Left cardiac atrium (tissue), 4 donors: ENCODE measurements at regions of chr12 and their contacts with region 1.

Region 1: DNA sequence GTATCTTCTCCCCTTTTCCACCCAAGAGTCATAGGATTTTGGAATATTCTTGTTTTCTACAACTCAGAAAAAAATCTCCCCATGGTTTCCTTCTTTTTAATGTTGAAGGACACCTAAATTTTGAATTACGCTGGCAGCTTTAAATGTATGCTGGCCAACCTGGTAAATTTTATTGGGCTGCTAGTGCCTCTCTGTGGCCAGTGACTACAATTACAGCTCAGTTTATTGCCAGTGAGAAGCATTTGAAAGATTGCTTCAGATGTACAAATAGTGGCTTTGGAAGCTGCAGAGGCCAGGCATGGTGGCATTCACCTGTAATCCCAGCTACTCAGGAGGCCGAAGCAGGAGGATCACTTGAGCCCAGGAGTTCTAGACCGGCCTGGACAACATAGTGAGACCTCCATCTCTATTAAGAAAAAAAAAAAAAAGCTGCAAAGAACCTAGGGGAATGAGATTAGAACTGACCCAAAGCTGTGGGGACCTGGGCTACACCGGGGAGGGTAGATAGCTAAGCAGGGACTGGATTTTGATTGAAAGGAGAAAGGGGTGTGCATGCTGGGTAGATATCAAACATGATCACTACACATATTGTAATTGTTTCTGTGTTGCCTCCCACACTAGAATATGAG is 7.6 kb upstream of the RAB21 start:
- DNase-seq: no peak
- ATAC-seq: peak; percentile 78 to 86

Region 2: DNA sequence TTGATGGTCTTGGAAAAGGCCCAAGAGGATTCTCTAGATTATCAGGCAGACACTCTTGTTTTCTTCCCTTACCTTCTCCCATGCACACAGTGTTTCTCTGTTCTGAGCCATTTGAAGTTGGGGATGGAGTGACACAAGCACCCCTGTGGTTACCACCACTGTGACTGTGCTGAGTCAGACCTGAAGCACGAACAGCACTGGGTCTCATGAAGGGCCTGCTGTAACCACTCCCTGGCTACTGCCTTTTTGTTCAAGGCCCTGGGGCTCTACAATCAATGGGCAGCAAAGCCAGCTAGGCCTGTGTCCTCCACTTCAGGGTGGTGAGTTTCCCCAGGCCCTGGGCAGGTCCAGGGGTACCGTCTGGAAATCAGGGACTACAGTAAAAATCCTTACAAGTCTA is 654.8 kb before region 1 on chr12:
- intact Hi-C with region 1: no loop called
- DNase-seq: no peak
- ATAC-seq: no peak

Region 3: GRCh38 chr12:71415336-71416231 is 331.5 kb before region 1 on chr12:
- intact Hi-C with region 1: loop called (anchors 5 kb)
- DNase-seq: no peak
- ATAC-seq: peak; percentile 56 to 73

Region 4: DNA sequence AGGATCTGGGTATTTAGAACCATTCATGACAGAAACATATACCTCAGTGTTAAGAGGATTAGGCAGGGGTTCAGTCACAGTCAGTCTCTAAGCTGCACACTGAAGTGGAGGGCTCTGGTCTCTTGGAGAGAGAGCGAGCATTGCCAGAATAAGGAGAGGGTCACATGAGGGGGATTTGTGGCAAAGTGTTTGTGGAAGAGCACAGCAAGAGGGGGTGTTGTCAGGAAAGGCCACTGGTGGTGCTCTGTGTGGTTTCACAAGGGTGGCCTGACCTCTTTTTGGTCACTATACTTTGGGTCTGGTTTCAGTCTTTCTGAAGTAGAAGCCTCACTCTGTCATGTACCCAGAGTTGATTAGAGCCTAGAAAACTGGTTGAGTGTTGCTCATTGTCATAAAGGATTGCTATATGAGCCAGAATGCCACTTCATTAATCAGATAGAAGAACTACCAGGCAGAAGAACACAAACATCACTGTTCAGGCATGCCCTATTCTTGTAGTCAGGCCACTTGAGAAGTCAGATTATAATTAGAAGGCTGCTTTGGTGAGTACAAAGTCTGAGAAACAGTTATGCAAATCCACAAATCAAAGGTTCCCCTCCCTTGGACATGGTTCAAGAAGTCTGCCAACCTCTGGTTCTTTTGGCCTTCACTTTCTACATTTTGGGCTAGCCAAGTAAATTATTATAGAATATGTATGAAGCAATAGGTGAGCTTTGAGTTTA is 52.8 kb before region 1 on chr12:
- intact Hi-C with region 1: loop called in 1 of 2 experiments (anchors 10 kb)
- DNase-seq: no peak
- ATAC-seq: peak; percentile 76 to 88

Region 5: GRCh38 chr12:71865166-71865713 is 118.1 kb after region 1 on chr12:
- intact Hi-C with region 1: no loop called
- DNase-seq: no peak
- ATAC-seq: peak in 1 of 2 donors; percentile 54

Region 6: DNA sequence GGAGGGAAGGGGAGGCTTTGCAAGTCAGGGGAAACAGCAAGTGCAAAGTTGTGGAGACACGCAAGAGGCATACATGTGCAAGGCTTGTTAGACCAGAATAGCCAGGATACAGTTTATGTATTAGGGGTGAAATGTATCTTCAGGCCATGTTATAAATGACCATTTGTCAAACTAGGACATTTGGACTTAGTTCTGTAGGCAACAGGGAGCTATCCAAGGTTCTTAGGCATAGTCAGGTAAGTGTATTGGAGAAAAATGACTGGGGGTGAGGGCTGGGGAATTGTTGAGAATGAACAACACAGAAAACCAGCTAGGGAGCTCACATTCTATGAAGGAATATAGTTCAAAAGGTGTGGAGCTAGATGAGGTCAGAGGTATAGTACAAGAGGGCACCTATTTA is 234.1 kb after region 1 on chr12:
- intact Hi-C with region 1: no loop called
- DNase-seq: no peak
- ATAC-seq: no peak